Activated T-helper 1 cell treated with anti-CD3 and anti-CD28 coated beads, Interleukin-12 subunit alpha, Interleukin-12 subunit beta, Interleukin-2, Interleukin-4 antibody, amounts not matched to agents 30 ng/mL and 10 ng/mL and 1 ng/mL, durations not matched to agents 14 hours and 24 hours and 36 hours (primary cell): ENCODE measurements at regions of chr19 and their contacts with region 1.

Region 1: DNA sequence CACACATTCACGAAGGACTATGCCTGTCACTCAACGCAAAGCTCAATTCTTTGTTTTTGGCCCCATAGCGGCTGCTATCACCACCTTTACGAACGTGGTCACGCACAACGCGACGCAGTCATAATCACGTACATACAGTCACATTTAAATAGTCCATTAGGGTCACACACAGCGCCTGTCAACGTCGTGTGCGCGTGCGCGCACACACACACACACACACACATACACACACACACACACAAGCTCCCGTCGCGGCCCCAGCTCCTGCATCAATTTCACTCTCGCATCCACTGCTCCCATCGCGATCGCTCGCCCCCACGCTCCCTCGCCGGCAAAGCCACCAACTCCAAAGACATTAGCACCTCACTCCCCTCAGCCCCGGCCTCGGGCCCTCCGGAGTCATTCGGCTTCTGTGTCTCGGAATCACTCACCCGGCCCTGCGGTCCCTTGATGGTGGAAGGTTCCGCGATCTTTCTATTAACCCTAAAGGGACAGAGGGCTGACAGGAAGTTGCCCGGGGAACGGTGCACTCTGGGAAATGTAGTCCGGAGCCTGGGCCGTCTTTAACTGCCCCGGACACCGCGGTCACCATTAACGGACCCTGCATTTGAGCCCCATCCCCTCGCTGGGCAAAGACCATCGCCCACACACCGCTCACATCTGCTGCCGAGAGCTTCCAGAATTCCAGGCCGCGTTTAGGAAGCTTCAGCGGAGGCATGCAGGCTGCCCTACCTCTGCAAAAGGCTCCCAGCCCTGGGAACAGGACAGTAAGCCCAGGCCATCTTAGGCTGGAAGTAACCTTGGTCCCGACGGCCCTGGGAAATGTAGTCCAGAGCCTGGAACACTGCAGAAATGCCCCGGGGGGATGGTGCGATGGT is at the start of gene ZNF790:
- DNase-seq: peak; percentile 81
- H3K4me3 Mint-ChIP-seq: no peak within 1 kb of the TSS
- H3K27ac Mint-ChIP-seq: no peak within 1 kb of the TSS
- H3K4me1 Mint-ChIP-seq: no peaks in the 10 kb centered on the region
- H3K27me3 Mint-ChIP-seq: no peaks in the 10 kb centered on the region
- total RNA-seq, gene ZNF790: 4.4 and 4.5 TPM in 2 replicates

Region 2: DNA sequence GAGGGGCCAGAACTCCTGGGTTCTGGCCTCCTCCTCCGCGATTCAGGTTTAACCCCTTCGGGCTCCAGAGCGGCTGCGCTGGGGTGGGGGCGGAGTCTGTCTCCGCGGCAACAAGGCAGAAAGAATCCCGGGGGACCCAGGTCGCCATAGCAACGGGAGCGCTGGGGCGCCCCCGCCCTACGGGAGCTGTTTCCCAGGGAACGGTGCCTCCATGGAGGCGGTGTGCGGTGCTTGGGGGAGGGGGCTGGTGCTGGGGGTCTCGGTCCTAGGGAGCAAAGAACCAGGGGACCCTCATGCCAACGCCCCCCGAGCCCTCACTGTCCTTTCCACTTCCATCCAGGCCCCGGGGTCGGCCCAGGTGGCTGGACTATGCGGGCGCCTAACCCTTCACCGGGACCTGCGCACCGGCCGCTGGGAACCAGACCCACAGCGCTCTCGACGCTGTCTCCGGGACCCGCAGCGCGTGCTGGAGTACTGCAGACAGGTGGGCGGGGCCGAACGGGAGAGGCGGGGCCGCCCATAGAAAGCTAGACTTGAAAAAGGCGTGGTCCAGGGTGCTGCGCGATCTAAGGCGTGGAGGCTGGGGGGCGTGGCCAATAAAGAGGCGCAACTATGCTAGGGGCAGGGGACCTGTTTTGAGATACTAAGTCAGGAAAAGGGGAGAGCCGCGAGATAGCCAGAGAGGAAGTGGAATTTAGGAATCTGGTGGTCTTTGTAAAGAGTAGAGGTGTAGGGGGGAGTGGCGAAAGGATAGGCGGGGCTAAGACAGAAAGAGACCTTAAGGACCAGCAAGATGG is 968.6 kb before region 1 on chr19:
- intact Hi-C with region 1: no loop called
- DNase-seq: peak; percentile 85
- H3K4me3 Mint-ChIP-seq: peak overlapping the region; percentile 81
- H3K27ac Mint-ChIP-seq: peak overlapping the region; percentile 42
- H3K4me1 Mint-ChIP-seq: peaks cover 23% of the 10 kb centered on the region
- H3K27me3 Mint-ChIP-seq: peaks cover 26% of the 10 kb centered on the region

Region 3: GRCh38 chr19:36573020-36573885 is 264.9 kb before region 1 on chr19 and contains the start of gene ZNF529:
- intact Hi-C with region 1: loop called (anchors 1 kb)
- DNase-seq: peak; percentile 85
- H3K4me3 Mint-ChIP-seq: peak within 1 kb of the TSS; percentile 89
- H3K27ac Mint-ChIP-seq: peak within 1 kb of the TSS; percentile 98
- H3K4me1 Mint-ChIP-seq: peaks cover 31% of the 10 kb centered on the region
- H3K27me3 Mint-ChIP-seq: no peaks in the 10 kb centered on the region
- total RNA-seq, gene ZNF529: 20.3 and 20.7 TPM in 2 replicates

Region 4: DNA sequence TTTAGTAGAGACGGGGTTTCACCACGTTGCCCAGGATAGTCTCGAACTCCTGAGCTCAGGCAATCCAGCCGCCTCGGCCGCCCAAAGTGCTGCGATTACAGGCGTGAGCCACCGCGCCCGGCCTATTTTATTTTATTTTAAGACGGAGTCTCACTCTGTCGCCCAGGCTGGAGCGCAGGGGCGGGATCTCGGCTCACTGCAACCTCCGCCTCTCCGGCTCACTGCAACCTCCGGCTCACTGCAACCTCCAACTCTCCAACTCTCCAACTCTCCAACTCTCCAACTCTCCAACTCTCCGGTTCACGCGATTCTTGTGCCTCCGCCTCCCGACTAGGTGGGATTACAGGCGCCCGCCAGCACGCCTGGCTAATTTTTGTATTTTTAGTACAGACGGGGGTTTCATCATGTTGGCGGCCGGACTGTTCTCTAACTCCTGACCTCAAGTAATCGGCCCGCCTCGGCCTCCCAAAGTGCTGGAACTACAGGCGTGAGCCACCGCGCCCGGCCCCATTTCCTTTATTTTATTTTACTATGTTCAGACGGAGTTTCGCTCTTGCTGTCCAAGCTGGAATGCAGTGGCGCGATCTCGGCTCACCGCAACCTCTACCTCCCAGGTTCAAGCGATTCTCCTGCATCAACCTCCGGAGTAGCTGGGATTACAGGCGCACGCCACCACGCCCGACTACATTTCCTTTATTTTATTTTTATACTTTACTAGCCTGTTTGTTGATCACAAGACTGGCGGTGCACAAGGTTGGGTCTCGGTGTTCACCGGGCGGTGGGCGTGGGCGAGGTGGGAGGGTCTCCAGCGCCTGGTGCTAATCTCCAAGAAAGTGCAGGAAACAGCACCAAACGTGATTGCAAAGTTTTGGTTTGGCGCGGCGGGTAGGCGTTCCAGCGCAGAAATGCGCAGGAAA is 41.8 kb before region 1 on chr19:
- intact Hi-C with region 1: loop called (anchors 5 kb)
- DNase-seq: no peak
- H3K4me3 Mint-ChIP-seq: peak overlapping the region; percentile 85
- H3K27ac Mint-ChIP-seq: no peak overlapping the region
- H3K4me1 Mint-ChIP-seq: no peaks in the 10 kb centered on the region
- H3K27me3 Mint-ChIP-seq: no peaks in the 10 kb centered on the region